Psoas muscle (tissue), 8 donors: ENCODE measurements at regions of chr2 and their contacts with region 1.

Region 1: GRCh38 chr2:218186355-218186766 is 19.6 kb upstream of the CXCR1 start:
- DNase-seq: peak; percentile 53 to 69
- ATAC-seq: peak; percentile 89 to 97 (median 94)
- H3K4me3 ChIP-seq: no peak overlapping the region
- H3K27ac ChIP-seq: peak overlapping the region; percentile 23
- H3K4me1 ChIP-seq: peaks cover 14% of the 10 kb centered on the region
- H3K27me3 ChIP-seq: no peaks in the 10 kb centered on the region
- CTCF ChIP-seq: peak; percentile 68

Region 2: DNA sequence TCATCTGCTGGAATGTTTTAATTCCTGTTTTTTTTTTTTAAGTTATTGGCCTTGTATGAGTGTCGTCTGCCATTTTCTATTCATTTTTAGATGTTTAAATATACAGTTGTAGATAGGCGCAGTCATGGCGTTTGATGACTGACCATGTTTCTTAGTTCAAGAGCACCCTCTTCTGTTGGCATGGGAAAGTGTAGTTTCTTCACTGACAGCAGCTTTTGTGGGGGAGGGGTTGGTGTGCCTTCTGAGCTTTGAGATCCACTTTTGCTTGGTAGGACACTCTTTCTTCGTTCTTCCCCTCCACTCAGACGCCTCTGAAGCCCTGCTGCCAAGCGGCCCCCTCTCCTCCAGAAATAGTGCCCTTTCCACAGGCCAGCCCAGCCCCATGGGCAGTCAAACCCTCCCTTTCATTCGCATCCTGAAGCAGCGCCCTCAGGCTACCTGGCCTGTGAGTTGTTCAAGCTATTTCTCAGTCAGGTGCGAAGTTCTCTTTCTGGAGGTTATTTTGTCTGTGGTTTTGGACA is 675.5 kb before region 1 on chr2:
- intact Hi-C with region 1: no loop called
- DNase-seq: peak in 1 of 2 donors; percentile 22
- ATAC-seq: peak; percentile 89 to 98 (median 94)
- H3K4me3 ChIP-seq: peak overlapping the region; percentile 30
- H3K27ac ChIP-seq: no peak overlapping the region
- H3K4me1 ChIP-seq: no peaks in the 10 kb centered on the region
- H3K27me3 ChIP-seq: no peaks in the 10 kb centered on the region
- CTCF ChIP-seq: peak; percentile 73

Region 3: DNA sequence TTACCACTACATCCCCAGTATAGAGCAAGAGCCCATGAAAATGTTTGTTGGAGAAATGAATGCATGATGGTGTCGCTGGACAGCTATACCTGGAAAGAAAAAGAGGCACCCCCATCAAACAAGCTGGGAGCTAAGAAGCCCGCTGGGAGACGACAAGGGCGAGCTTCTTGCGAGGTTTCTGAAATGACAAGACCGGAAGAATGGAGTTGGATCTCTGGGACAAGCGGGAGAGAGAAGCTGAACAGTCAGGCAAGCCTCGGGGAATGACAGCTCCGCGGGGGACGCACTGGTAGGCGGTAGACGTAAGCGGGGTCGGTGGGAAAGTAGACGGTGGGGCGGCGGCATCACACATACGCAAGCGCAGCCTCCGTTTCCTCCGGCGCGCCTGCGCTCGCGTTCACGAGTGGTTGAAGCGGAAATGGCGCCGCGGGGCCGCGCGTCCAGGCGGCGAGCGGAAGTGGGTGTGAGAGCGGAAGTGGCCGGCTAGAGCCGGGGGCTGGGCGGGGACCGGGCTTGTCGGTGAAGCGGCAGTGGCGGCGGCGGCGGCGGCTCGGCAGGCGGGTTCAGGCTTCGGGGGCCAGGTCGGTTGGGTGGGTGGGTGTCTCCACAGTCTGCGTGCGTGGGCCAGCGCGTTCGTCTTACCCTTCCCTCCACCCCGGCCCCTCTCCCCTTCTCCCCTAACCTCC is 30.5 kb after region 1 on chr2 and contains the start of gene ARPC2:
- intact Hi-C with region 1: loop called in 1 of 2 experiments (anchors 2 kb)
- DNase-seq: peak; percentile 95 to 97
- ATAC-seq: peak; percentile 94 to 98 (median 96)
- H3K4me3 ChIP-seq: peak within 1 kb of the TSS; percentile 92
- H3K27ac ChIP-seq: peak within 1 kb of the TSS; percentile 95
- H3K4me1 ChIP-seq: peaks cover 38% of the 10 kb centered on the region
- H3K27me3 ChIP-seq: no peaks in the 10 kb centered on the region
- CTCF ChIP-seq: peak; percentile 20
- total RNA-seq, gene ARPC2: 150 to 218 (median 188) TPM

Region 4: DNA sequence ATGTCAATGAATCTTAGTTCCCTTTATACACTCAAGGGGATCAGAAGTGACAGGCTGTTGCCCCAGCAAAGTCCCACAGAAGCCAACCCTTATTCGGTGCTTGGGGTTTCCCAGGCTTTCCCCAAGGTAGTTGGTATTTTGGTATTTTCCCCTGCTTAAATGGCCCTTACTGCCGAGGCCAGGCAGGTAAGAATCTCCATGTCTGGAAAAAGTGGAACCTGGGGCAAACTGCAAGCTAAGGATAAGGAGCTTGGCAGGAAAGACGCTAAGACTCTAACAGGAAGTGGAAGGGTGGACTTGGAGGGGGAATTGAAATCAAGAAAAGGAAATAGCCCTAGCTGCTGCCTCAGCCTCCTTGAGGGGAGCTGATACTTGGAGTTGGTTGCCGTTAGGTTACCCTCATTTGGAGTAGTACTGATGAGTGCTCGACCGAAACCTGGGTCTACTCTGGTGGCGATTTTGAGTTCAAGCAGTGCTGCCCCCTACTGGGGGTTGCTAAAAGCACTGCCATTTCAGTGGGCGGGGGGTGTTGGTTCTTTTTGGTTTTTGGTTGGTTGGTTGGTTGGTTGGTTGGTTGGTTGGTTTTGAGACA is 71.1 kb after region 1 on chr2:
- intact Hi-C with region 1: loop called (anchors 5 kb)
- DNase-seq: no peak
- ATAC-seq: peak in 3 of 4 donors; percentile 39 to 47 (median 40)
- H3K4me3 ChIP-seq: no peak overlapping the region
- H3K27ac ChIP-seq: peak overlapping the region; percentile 41
- H3K4me1 ChIP-seq: peaks cover 32% of the 10 kb centered on the region
- H3K27me3 ChIP-seq: no peaks in the 10 kb centered on the region
- CTCF ChIP-seq: peak; percentile 29

Region 5: GRCh38 chr2:218269899-218270720 is 83.7 kb after region 1 on chr2 and contains the starts of genes AAMP and PNKD:
- intact Hi-C with region 1: loop called (anchors 5 kb)
- DNase-seq: peak; percentile 100
- ATAC-seq: peak; percentile 91 to 95 (median 93)
- H3K4me3 ChIP-seq: peak within 1 kb of the TSS; percentile 88
- H3K27ac ChIP-seq: peak within 1 kb of the TSS; percentile 91
- H3K4me1 ChIP-seq: peaks cover 40% of the 10 kb centered on the region
- H3K27me3 ChIP-seq: no peaks in the 10 kb centered on the region
- CTCF ChIP-seq: no peak
- total RNA-seq, gene AAMP: 52.7 to 70.6 (median 62.5) TPM
- total RNA-seq, gene PNKD: 31.5 to 54.5 (median 41.0) TPM

Region 6: GRCh38 chr2:218418717-218419458 is 232.5 kb after region 1 on chr2 and contains the start of gene VIL1:
- intact Hi-C with region 1: no loop called
- DNase-seq: peak in 1 of 2 donors; percentile 36
- ATAC-seq: no peak
- H3K4me3 ChIP-seq: no peak within 1 kb of the TSS
- H3K27ac ChIP-seq: no peak within 1 kb of the TSS
- H3K4me1 ChIP-seq: no peaks in the 10 kb centered on the region
- H3K27me3 ChIP-seq: no peaks in the 10 kb centered on the region
- CTCF ChIP-seq: no peak
- total RNA-seq, gene VIL1: not detected

Region 7: GRCh38 chr2:218438601-218438995 is 252.2 kb after region 1 on chr2:
- intact Hi-C with region 1: no loop called
- DNase-seq: peak in 1 of 2 donors; percentile 42
- ATAC-seq: no peak
- H3K4me3 ChIP-seq: no peak overlapping the region
- H3K27ac ChIP-seq: no peak overlapping the region
- H3K4me1 ChIP-seq: no peaks in the 10 kb centered on the region
- H3K27me3 ChIP-seq: no peaks in the 10 kb centered on the region
- CTCF ChIP-seq: no peak

Region 8: GRCh38 chr2:218466016-218466521 is 279.7 kb after region 1 on chr2:
- intact Hi-C with region 1: loop called in 1 of 2 experiments (anchors 5 kb)
- DNase-seq: no peak
- ATAC-seq: peak in 1 of 4 donors; percentile 45
- H3K4me3 ChIP-seq: no peak overlapping the region
- H3K27ac ChIP-seq: no peak overlapping the region
- H3K4me1 ChIP-seq: no peaks in the 10 kb centered on the region
- H3K27me3 ChIP-seq: no peaks in the 10 kb centered on the region
- CTCF ChIP-seq: peak; percentile 47